ENCODE measurements at regions of chr2 and their contacts with region 1.

Region 1: DNA sequence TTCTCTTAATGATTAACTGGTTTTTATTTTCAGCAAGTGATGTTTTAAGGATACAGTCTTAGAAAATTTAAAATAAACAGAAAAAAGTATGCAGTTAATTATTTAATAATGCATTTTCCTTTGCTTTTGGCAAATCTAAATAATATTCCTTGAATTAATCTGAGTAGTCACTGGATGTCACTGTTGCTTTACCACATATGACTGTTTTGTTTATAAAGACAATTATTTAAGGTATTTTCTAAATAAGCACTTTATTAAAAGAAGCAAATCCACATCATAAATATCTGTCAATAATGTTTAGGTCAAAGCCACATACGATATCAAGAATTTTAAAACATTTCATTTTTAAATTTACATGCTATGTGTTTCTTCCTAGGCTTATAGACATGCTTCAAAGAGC is 40.6 kb upstream of the TFPI start:
- DNase-seq: no peak
- H3K4me3 ChIP-seq: no peak overlapping the region
- H3K27ac ChIP-seq: no peak overlapping the region
- H3K4me1 ChIP-seq: no peaks in the 10 kb centered on the region; a peak in 1 of 4 replicates
- H3K27me3 ChIP-seq: no peaks in the 10 kb centered on the region
- CTCF ChIP-seq: peak; percentile 62
- EP300 ChIP-seq: no peak
- RAD21 ChIP-seq: peak; percentile 66

Region 2: DNA sequence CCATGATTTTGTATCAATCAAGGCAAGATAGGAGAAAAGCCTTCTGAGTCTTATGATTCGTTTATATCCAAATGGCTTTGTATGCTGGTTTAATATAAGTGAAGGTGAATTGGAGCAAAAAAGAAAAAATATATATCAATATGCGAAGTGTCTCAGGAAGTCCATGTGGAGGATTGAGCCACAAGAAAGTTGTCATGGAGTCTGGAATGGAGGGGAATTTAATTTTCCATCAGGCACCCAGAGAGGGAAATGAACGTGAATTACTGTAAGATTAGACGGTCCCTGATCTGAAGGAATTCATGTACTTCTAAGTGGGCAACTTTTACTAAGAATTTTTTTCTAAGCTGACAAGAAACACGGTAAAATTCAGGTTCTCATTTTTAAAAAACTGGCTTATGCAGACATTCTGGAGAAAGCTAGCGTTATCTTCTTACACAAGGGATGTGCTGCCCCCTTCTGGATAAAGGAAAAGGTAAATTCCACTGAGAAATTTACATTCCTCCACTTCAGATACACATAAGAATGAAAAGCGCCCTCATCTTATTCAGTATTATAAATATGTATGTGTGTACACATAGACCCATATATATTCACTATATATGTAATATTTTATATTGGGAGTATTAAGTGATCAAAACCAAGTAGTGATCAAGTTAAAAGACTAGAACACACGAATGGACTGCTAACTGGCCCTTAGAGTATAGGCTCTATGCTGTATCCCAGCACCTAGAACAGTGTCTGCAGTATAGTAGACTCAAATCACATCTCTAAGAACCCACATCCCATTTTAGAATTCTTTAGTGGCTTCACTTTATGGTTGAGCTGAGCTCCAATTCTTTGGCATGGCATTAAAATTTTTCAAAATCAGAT is 248.4 kb after region 1 on chr2:
- CTCF ChIA-PET with region 1: interaction called, 10 read pairs
- POLR2A ChIA-PET with region 1: no interaction called
- DNase-seq: peak; percentile 15
- H3K4me3 ChIP-seq: no peak overlapping the region; a peak in 1 of 4 replicates
- H3K27ac ChIP-seq: no peak overlapping the region
- H3K4me1 ChIP-seq: no peaks in the 10 kb centered on the region
- H3K27me3 ChIP-seq: no peaks in the 10 kb centered on the region
- CTCF ChIP-seq: peak; percentile 81
- EP300 ChIP-seq: no peak
- RAD21 ChIP-seq: peak; percentile 77

Measured in SK-N-SH (cell line).